ENCODE measurements at regions of chr2 and their contacts with region 1.

Region 1: GRCh38 chr2:196068271-196069209 is at the start of gene DNAH7:
- DNase-seq: peak; percentile 95
- H3K4me3 Mint-ChIP-seq: peak within 1 kb of the TSS; percentile 73
- H3K27ac Mint-ChIP-seq: peak within 1 kb of the TSS; percentile 3
- H3K4me1 Mint-ChIP-seq: peaks cover 10% of the 10 kb centered on the region
- H3K27me3 Mint-ChIP-seq: peaks cover 38% of the 10 kb centered on the region

Region 2: GRCh38 chr2:195664528-195664927 is 404.0 kb before region 1 on chr2:
- CTCF ChIA-PET with region 1: interaction called, 12 read pairs
- DNase-seq: no peak
- H3K4me3 Mint-ChIP-seq: no peak overlapping the region
- H3K27ac Mint-ChIP-seq: no peak overlapping the region
- H3K4me1 Mint-ChIP-seq: peaks cover 33% of the 10 kb centered on the region
- H3K27me3 Mint-ChIP-seq: no peaks in the 10 kb centered on the region

Region 3: DNA sequence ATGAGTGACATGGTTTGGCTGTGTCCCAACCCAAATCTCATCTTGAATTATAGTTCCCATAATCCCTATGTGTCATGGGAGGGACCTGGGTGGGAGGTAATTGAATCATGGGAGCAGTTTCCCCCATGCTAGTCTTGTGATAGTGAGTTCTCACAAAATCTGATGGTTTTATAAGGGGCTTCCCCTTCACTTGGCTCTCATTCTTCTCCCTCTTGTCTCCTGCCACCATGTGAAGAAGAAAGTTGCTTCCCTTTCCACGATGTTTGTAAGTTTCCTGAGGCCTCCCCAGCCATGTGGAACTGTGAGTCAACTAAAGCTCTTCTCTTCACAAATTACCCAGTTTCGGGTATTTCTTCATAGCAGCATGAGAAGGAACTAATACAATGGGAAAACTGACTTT is 13.9 kb before region 1 on chr2:
- CTCF ChIA-PET with region 1: interaction called, 17 read pairs
- DNase-seq: no peak
- H3K4me3 Mint-ChIP-seq: no peak overlapping the region
- H3K27ac Mint-ChIP-seq: no peak overlapping the region
- H3K4me1 Mint-ChIP-seq: no peaks in the 10 kb centered on the region
- H3K27me3 Mint-ChIP-seq: peaks cover 3% of the 10 kb centered on the region

Region 4: DNA sequence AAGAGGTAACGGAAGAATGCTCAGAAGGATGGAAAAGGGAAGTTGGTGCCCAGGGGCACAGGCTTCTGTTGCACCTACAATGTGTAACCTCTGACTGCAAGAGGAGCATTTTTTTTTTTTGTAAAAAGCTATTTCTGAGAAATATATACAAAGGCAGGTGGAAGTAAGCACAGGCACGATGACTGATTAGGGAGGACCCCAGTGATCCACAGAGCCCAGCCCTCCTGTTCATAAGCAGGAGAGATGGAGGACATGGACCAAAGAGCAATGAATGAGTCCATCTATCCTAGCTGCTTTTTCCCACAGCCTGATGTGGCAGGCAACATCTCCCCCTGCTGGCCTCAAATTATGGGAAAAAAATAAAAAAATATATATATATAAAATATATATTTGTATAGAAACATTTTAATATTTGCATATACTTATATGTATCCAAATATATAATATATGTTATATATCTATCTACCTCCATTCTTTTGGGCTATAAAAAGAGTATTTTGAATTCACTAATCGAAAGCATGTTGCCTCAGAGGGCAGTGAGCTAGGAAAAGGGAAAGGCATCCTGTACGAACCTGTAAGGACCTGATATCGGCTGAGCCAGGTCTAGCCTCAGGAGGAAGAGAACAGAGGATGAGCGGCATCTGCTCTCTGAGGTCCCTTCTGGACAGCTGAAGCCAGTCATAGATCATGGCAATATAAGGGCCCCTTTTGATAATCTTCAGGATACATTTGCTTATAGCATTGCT is 268.8 kb after region 1 on chr2:
- CTCF ChIA-PET with region 1: interaction called, 20 read pairs
- DNase-seq: peak; percentile 35
- H3K4me3 Mint-ChIP-seq: no peak overlapping the region
- H3K27ac Mint-ChIP-seq: no peak overlapping the region
- H3K4me1 Mint-ChIP-seq: no peaks in the 10 kb centered on the region
- H3K27me3 Mint-ChIP-seq: peaks cover 14% of the 10 kb centered on the region

Region 5: DNA sequence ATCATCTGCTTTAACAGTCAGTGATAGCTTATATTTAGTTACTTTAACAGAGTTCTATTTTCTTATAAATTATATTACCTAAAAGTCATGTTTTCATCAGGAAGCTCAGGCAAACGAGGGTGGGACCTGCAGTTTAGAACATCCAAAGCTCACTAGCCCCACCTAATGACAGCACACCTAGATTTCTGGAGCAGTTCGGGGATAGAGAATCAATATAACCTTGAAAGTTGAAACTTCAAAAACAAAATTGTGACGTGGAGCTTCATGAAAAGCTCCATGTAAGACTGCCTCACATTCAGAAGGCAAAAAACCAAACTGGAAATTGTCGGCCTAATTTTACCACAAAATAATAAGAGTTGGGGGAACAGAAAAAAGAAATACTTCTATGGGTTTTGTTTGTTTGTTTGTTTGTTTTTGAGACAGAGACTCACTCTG is 385.1 kb after region 1 on chr2:
- CTCF ChIA-PET with region 1: interaction called, 17 read pairs
- DNase-seq: peak; percentile 43
- H3K4me3 Mint-ChIP-seq: no peak overlapping the region
- H3K27ac Mint-ChIP-seq: no peak overlapping the region
- H3K4me1 Mint-ChIP-seq: peaks cover 2% of the 10 kb centered on the region
- H3K27me3 Mint-ChIP-seq: peaks cover 4% of the 10 kb centered on the region

Measured in activated naive CD4-positive, alpha-beta T cell treated with anti-CD3 and anti-CD28 coated beads, Interleukin-2, amount 10 ng/mL, durations not matched to agents 7 days and 5 days (primary cell).